Ascending aorta (tissue), 2 donors: ENCODE measurements at regions of chr20 and their contacts with region 1.

Region 1: DNA sequence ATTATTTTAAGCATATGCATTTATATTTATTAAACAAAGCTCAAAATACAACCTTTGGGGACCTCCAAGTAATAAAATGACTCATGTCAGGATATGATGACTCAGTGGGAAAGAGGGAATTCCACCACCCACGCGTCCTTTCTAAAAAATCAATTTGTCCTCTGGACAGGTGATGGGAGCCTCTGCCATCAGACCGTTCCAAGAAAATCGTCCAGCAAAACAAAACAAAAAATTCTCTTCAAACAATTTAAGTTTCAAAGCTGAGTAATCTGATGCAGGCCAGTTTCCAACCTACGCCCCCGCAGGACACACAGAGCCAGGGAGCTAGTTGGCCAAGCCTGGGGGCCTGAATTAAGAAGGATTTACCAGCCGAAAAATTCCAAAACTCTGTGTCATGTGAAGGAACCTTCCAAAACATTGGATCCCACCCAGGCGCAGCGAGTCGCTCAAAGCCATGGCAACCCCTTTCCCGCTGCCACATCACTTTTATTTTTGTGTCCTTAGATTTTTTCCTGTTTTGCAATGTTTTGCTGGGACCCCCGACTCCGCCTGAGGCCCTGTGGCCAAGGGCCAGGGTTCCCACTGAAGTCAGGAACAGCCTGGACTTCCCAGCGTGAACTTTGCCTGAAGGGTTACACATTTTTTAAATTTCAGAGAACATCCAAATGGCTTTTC is 95.3 kb downstream of the NFATC2 start:
- DNase-seq: peak; percentile 33 to 96
- H3K4me3 ChIP-seq: no peak overlapping the region
- H3K27ac ChIP-seq: peak overlapping the region; percentile 8 to 70
- H3K4me1 ChIP-seq: peaks cover 15 to 27% of the 10 kb centered on the region in 2 donors
- H3K27me3 ChIP-seq: no peaks in the 10 kb centered on the region
- CTCF ChIP-seq: no peak

Region 2: GRCh38 chr20:51335329-51335841 is 111.8 kb before region 1 on chr20:
- intact Hi-C with region 1: no loop called
- DNase-seq: no peak
- H3K4me3 ChIP-seq: no peak overlapping the region
- H3K27ac ChIP-seq: no peak overlapping the region
- H3K4me1 ChIP-seq: no peaks in the 10 kb centered on the region
- H3K27me3 ChIP-seq: no peaks in the 10 kb centered on the region
- CTCF ChIP-seq: no peak

Region 3: GRCh38 chr20:51366155-51366886 is 80.9 kb before region 1 on chr20:
- intact Hi-C with region 1: loop called (anchors 5 kb)
- DNase-seq: peak; percentile 53 to 94
- H3K4me3 ChIP-seq: peak overlapping the region in 1 of 2 donors; percentile 17
- H3K27ac ChIP-seq: peak overlapping the region; percentile 91
- H3K4me1 ChIP-seq: peaks cover 6 to 13% of the 10 kb centered on the region in 2 donors
- H3K27me3 ChIP-seq: no peaks in the 10 kb centered on the region
- CTCF ChIP-seq: no peak

Region 4: GRCh38 chr20:51428401-51429143 is 18.7 kb before region 1 on chr20:
- intact Hi-C with region 1: loop called (anchors 2 kb)
- DNase-seq: peak in 1 of 2 donors; percentile 76
- H3K4me3 ChIP-seq: peak overlapping the region in 1 of 2 donors; percentile 55
- H3K27ac ChIP-seq: peak overlapping the region; percentile 70 to 80
- H3K4me1 ChIP-seq: peaks cover 5 to 14% of the 10 kb centered on the region in 2 donors
- H3K27me3 ChIP-seq: no peaks in the 10 kb centered on the region
- CTCF ChIP-seq: no peak

Region 5: GRCh38 chr20:51531141-51531710 is 84.0 kb after region 1 on chr20:
- intact Hi-C with region 1: loop called (anchors 5 kb)
- DNase-seq: peak in 1 of 2 donors; percentile 61
- H3K4me3 ChIP-seq: no peak overlapping the region
- H3K27ac ChIP-seq: peak overlapping the region in 1 of 2 donors; percentile 76
- H3K4me1 ChIP-seq: peaks cover 7 to 11% of the 10 kb centered on the region in 2 donors
- H3K27me3 ChIP-seq: no peaks in the 10 kb centered on the region
- CTCF ChIP-seq: no peak

Region 6: GRCh38 chr20:51562332-51563155 is 115.3 kb after region 1 on chr20:
- intact Hi-C with region 1: loop called (anchors 1 kb)
- DNase-seq: peak; percentile 53 to 95
- H3K4me3 ChIP-seq: peak overlapping the region; percentile 60 to 69
- H3K27ac ChIP-seq: peak overlapping the region; percentile 92 to 93
- H3K4me1 ChIP-seq: peaks cover 6 to 24% of the 10 kb centered on the region in 2 donors
- H3K27me3 ChIP-seq: no peaks in the 10 kb centered on the region
- CTCF ChIP-seq: peak in 1 of 3 experiments; percentile 46

Region 7: GRCh38 chr20:51631011-51631950 is 184.0 kb after region 1 on chr20:
- intact Hi-C with region 1: loop called (anchors 5 kb)
- DNase-seq: peak; percentile 25 to 86
- H3K4me3 ChIP-seq: peak overlapping the region; percentile 8 to 25
- H3K27ac ChIP-seq: peak overlapping the region; percentile 78 to 90
- H3K4me1 ChIP-seq: peaks cover 15 to 21% of the 10 kb centered on the region in 2 donors
- H3K27me3 ChIP-seq: no peaks in the 10 kb centered on the region
- CTCF ChIP-seq: no peak